Mammary epithelial cell (primary cell): ENCODE measurements at regions of chr10 and their contacts with region 1.

Region 1: GRCh38 chr10:116723428-116724281 is 18.7 kb downstream of the HSPA12A start:
- DNase-seq: no peak
- H3K4me3 ChIP-seq: no peak overlapping the region
- H3K27ac ChIP-seq: no peak overlapping the region
- H3K4me1 ChIP-seq: no peaks in the 10 kb centered on the region
- H3K27me3 ChIP-seq: no peaks in the 10 kb centered on the region
- CTCF ChIP-seq: no peak

Region 2: DNA sequence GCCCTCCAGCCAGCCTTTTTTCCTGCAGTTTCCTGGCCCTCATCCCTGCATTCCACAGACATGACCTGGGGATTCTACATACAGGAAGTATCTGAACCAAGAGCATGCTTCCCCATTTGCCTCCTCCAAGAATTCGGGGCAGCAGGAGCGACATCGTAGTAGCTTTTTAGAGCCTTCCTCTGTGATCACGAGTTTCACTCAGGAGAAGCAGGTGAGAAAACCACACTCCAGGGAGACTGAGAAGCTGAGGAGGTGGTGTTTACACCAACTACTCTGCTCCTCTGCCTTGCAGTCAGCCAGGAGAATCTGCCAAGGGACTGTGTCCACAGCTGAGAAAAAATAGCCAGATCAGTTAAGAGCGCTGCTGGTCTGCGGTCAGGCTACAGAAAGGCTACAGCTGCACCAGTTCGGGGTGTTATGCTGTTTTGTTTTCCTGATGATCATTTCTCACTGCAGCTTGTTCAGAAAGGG is 35.4 kb before region 1 on chr10:
- CTCF ChIA-PET with region 1: no interaction called
- dilution Hi-C with region 1: no loop called
- in situ Hi-C with region 1: no loop called
- intact Hi-C with region 1: no loop called
- DNase-seq: peak; percentile 15
- H3K4me3 ChIP-seq: no peak overlapping the region
- H3K27ac ChIP-seq: no peak overlapping the region
- H3K4me1 ChIP-seq: no peaks in the 10 kb centered on the region
- H3K27me3 ChIP-seq: no peaks in the 10 kb centered on the region
- CTCF ChIP-seq: no peak

Region 3: GRCh38 chr10:116757246-116757645 is 33.6 kb after region 1 on chr10:
- CTCF ChIA-PET with region 1: interaction called, 15 read pairs
- dilution Hi-C with region 1: no loop called
- in situ Hi-C with region 1: no loop called
- intact Hi-C with region 1: no loop called
- DNase-seq: no peak
- H3K4me3 ChIP-seq: no peak overlapping the region
- H3K27ac ChIP-seq: no peak overlapping the region
- H3K4me1 ChIP-seq: peaks cover 27% of the 10 kb centered on the region
- H3K27me3 ChIP-seq: no peaks in the 10 kb centered on the region
- CTCF ChIP-seq: no peak

Region 4: DNA sequence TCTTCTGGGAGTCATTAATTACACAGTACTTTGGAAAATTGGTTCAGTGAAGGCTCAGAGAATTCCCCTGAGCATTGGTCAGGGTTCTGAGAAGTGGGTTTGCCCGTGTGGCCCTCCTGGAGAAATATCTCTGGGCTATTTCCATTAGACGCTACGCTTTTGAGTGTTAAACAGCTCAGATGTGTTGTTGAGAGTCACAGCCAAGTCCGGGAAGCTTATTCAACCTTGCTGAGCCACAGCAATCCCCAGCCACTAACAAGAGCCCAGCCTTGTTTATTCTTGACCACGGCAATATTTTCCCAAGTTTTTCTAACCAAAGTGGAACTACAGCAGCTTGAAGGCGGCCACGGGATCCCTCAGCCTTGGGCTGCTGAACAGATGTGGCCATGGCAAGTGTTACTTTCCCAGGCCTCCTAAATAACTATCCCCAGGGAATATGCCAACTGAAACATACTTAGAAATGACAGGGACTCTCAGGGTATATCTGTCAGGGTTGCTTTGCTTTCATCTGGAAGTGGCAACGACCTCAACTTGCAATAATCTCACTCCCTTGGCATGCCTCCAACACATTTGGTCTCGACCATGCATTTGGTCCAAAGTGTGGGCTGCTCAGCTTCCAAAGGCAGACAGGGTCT is 1033.5 kb after region 1 on chr10:
- CTCF ChIA-PET with region 1: no interaction called
- dilution Hi-C with region 1: no loop called
- in situ Hi-C with region 1: no loop called
- intact Hi-C with region 1: no loop called
- DNase-seq: no peak
- H3K4me3 ChIP-seq: no peak overlapping the region
- H3K27ac ChIP-seq: no peak overlapping the region
- H3K4me1 ChIP-seq: no peaks in the 10 kb centered on the region
- H3K27me3 ChIP-seq: peaks cover 2% of the 10 kb centered on the region
- CTCF ChIP-seq: no peak